H1 (cell line): ENCODE measurements at regions of chr19 and their contacts with region 1.

Region 1: GRCh38 chr19:2213799-2214198 is 22.3 kb downstream of the PLEKHJ1 start:
- DNase-seq: no peak
- H3K4me3 ChIP-seq: no peak overlapping the region
- H3K27ac ChIP-seq: no peak overlapping the region
- H3K4me1 ChIP-seq: no peaks in the 10 kb centered on the region
- H3K27me3 ChIP-seq: no peaks in the 10 kb centered on the region
- CTCF ChIP-seq: no peak
- EP300 ChIP-seq: no peak
- POLR2A ChIP-seq: no peak
- RAD21 ChIP-seq: no peak

Region 2: GRCh38 chr19:2160379-2160778 is 53.4 kb before region 1 on chr19:
- CTCF ChIA-PET with region 1: interaction called, 10 read pairs
- POLR2A ChIA-PET with region 1: no interaction called
- DNase-seq: no peak
- H3K4me3 ChIP-seq: no peak overlapping the region
- H3K27ac ChIP-seq: no peak overlapping the region
- H3K4me1 ChIP-seq: no peaks in the 10 kb centered on the region
- H3K27me3 ChIP-seq: no peaks in the 10 kb centered on the region
- CTCF ChIP-seq: no peak
- EP300 ChIP-seq: no peak
- POLR2A ChIP-seq: no peak
- RAD21 ChIP-seq: no peak

Region 3: GRCh38 chr19:2302319-2303210 is 88.8 kb after region 1 on chr19:
- CTCF ChIA-PET with region 1: no interaction called
- POLR2A ChIA-PET with region 1: no interaction called
- DNase-seq: peak in 1 of 2 experiments; percentile 79
- H3K4me3 ChIP-seq: peak overlapping the region in 3 of 4 experiments; percentile 29 to 54 (median 32); a peak in 5 of 8 replicates
- H3K27ac ChIP-seq: no peak overlapping the region
- H3K4me1 ChIP-seq: peaks cover 0 to 12% (median 8%) of the 10 kb centered on the region in 4 experiments; a peak in 5 of 7 replicates
- H3K27me3 ChIP-seq: peaks cover 0 to 30% (median 19%) of the 10 kb centered on the region in 4 experiments; a peak in 6 of 7 replicates
- CTCF ChIP-seq: no peak
- EP300 ChIP-seq: no peak
- POLR2A ChIP-seq: no peak
- RAD21 ChIP-seq: no peak